Natural killer cell (primary cell): ENCODE measurements at regions of chr4 and their contacts with region 1.

Region 1: DNA sequence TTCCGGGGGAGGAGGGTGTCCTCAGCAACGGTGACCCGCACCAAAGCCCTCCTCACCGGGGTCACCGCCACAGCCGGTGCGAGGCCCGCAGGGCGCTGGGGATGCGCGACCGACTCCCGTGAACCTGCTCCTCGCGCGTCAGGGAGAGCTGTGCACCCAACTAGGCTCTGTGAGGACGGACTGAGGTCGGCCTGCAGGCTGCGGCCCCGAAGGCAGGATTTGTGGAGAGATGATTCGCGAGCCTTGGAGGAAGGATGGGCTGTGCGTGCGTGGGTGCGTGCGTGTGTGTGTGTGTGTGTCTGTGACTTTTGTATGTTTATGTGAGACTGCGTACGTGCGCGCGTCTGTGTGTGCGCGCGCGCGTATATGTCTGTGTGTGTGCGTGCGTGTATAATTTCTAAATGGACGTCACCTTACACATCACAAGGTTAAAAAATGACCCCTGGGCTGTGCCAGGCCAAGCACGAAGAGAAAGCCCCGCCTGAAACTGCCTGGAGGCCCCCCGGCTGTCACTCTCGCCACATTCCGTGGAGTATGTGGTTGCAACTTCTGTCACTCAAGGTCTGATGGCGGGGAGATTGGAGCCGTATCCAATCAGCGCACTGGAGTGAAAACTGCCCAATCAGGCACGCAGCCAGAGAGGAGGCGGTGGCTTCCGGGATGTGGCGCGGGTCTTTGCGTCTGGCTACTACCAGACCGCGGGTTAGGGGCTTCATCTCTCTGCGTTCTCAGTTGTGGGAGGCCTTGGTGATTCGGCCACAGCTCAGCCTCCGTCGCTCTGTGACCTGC is at the start of gene ZNF141:
- DNase-seq: peak; percentile 88 to 96
- ATAC-seq: peak; percentile 87 to 95 (median 89)
- H3K4me3 ChIP-seq: peak within 1 kb of the TSS; percentile 97
- H3K4me3 Mint-ChIP-seq: peak within 1 kb of the TSS; percentile 100
- H3K27ac ChIP-seq: peak within 1 kb of the TSS; percentile 99
- H3K27ac Mint-ChIP-seq: peak within 1 kb of the TSS; percentile 99
- H3K4me1 ChIP-seq: peaks cover 18% of the 10 kb centered on the region
- H3K4me1 Mint-ChIP-seq: peaks cover 43 to 45% of the 10 kb centered on the region in 2 donors
- H3K27me3 ChIP-seq: no peaks in the 10 kb centered on the region
- H3K27me3 Mint-ChIP-seq: no peaks in the 10 kb centered on the region
- CTCF ChIP-seq: no peak
- total RNA-seq, gene ZNF141: 20.1 to 24.4 (median 23.6) TPM

Region 2: DNA sequence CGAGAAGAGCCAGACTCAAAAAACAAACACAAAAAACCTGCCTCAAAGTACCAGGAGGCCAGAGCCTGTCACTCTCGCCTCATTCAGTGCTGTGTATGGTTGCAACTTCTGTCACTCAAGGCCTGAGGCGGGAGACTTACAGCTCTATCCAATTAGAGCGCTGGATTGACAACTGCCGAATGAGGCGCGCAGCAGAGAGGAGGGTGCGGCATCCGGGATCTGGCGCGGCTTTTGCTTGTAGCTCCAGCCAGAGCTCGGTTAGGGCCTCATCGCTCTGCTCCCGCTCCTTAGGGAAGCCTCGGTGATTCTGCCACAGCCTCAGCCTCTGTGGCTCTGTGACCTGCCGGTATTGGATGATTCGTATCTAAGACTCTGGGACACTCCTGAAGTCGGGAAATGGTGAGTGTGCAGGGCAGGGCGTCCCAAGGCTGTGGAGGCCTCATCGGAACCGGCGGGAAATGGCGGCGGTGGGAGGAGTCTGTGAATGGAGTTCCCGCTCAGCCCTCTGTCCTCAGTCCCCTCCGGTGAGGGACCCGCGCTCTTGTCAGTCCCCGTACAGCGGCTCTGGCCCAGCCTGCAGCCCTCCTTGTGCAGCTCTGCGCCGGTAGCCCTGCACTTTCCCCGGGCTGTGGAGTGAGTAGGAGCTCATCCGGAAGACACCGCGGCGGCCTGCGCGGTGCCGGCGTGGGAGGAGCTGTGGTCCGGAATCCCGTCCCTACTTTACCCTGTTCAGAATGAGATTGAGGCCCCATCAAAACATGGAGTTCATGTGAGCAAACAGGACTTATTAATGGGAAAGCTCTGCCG is 212.9 kb before region 1 on chr4 and contains the start of gene ZNF718:
- intact Hi-C with region 1: loop called (anchors 5 kb)
- DNase-seq: peak; percentile 87 to 96
- ATAC-seq: peak; percentile 86 to 96 (median 89)
- H3K4me3 ChIP-seq: peak within 1 kb of the TSS; percentile 74
- H3K4me3 Mint-ChIP-seq: peak within 1 kb of the TSS; percentile 99
- H3K27ac ChIP-seq: peak within 1 kb of the TSS; percentile 78
- H3K27ac Mint-ChIP-seq: peak within 1 kb of the TSS; percentile 99
- H3K4me1 ChIP-seq: peaks cover 57% of the 10 kb centered on the region
- H3K4me1 Mint-ChIP-seq: peaks cover 53 to 54% of the 10 kb centered on the region in 2 donors
- H3K27me3 ChIP-seq: no peaks in the 10 kb centered on the region
- H3K27me3 Mint-ChIP-seq: no peaks in the 10 kb centered on the region
- CTCF ChIP-seq: no peak
- total RNA-seq, gene ZNF718: 7.9 to 16.1 (median 15.1) TPM

Region 3: GRCh38 chr4:473570-474457 is 136.5 kb after region 1 on chr4:
- intact Hi-C with region 1: loop called (anchors 1 kb)
- DNase-seq: peak; percentile 91 to 98
- ATAC-seq: peak; percentile 96 to 100 (median 97)
- H3K4me3 ChIP-seq: peak overlapping the region; percentile 92
- H3K4me3 Mint-ChIP-seq: peak overlapping the region; percentile 99
- H3K27ac ChIP-seq: peak overlapping the region; percentile 98
- H3K27ac Mint-ChIP-seq: peak overlapping the region; percentile 98 to 100
- H3K4me1 ChIP-seq: peaks cover 17% of the 10 kb centered on the region
- H3K4me1 Mint-ChIP-seq: peaks cover 62 to 67% of the 10 kb centered on the region in 2 donors
- H3K27me3 ChIP-seq: no peaks in the 10 kb centered on the region
- H3K27me3 Mint-ChIP-seq: no peaks in the 10 kb centered on the region
- CTCF ChIP-seq: no peak

Region 4: DNA sequence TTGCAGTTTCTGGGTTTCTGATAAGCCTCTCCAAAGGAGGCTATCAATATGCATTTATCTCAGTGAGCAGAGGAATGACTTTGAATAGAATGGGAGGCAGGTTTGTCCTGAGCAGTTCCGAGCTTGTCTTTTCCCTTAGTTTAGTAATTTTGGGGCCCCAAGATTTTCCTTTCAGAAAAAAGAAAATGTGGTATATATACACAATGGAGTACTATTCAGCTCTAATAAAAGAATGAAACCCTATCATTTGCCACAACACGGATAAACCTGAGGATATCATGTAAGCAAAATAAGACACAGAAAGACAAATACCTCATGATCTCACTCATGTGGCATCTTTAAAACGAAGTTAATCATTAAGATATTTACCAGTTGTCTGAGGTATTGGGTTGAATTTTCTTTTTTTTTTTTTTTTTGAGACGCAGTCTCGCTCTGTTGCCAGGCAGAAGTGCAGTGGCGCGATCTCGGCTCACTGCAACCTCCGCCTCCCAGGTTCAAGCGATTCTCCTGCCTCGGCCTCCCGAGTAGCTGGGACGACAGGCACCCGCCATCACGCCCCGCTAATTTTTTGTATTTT is 161.1 kb after region 1 on chr4:
- intact Hi-C with region 1: loop called (anchors 1 kb)
- DNase-seq: peak in 1 of 2 donors; percentile 44
- ATAC-seq: peak; percentile 37 to 53 (median 46)
- H3K4me3 ChIP-seq: peak overlapping the region; percentile 94
- H3K4me3 Mint-ChIP-seq: peak overlapping the region; percentile 97
- H3K27ac ChIP-seq: peak overlapping the region; percentile 93
- H3K27ac Mint-ChIP-seq: peak overlapping the region; percentile 94 to 99
- H3K4me1 ChIP-seq: peaks cover 17% of the 10 kb centered on the region
- H3K4me1 Mint-ChIP-seq: peaks cover 26 to 34% of the 10 kb centered on the region in 2 donors
- H3K27me3 ChIP-seq: no peaks in the 10 kb centered on the region
- H3K27me3 Mint-ChIP-seq: no peaks in the 10 kb centered on the region
- CTCF ChIP-seq: no peak

Region 5: DNA sequence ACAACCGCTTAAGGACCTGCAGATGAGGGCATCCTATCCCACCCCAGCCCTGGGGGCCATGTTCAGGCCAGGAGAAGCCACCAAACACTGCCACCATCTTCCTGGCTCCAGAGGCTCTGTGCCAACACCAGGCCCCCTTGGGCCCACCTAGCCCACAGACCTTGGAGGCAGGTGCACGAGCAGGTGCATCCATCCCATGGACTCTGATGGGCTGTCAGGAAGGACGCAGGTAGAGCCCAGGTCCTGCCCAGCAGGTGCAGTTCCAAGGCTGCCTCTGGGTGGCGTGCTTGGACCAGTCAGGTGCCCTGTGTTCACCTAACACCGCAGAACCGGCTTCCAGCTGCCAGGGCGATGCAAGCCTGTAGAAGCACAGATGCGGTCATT is 265.2 kb after region 1 on chr4:
- intact Hi-C with region 1: no loop called
- DNase-seq: peak; percentile 54 to 63
- ATAC-seq: peak; percentile 50 to 86 (median 79)
- H3K4me3 ChIP-seq: no peak overlapping the region
- H3K4me3 Mint-ChIP-seq: no peak overlapping the region
- H3K27ac ChIP-seq: no peak overlapping the region
- H3K27ac Mint-ChIP-seq: no peak overlapping the region
- H3K4me1 ChIP-seq: peaks cover 7% of the 10 kb centered on the region
- H3K4me1 Mint-ChIP-seq: peaks cover 13 to 14% of the 10 kb centered on the region in 2 donors
- H3K27me3 ChIP-seq: peaks cover 3% of the 10 kb centered on the region
- H3K27me3 Mint-ChIP-seq: peaks cover 13 to 18% of the 10 kb centered on the region in 2 donors
- CTCF ChIP-seq: peak; percentile 33